K562 (cell line): ENCODE measurements at regions of chr4 and their contacts with region 1.

Region 1: DNA sequence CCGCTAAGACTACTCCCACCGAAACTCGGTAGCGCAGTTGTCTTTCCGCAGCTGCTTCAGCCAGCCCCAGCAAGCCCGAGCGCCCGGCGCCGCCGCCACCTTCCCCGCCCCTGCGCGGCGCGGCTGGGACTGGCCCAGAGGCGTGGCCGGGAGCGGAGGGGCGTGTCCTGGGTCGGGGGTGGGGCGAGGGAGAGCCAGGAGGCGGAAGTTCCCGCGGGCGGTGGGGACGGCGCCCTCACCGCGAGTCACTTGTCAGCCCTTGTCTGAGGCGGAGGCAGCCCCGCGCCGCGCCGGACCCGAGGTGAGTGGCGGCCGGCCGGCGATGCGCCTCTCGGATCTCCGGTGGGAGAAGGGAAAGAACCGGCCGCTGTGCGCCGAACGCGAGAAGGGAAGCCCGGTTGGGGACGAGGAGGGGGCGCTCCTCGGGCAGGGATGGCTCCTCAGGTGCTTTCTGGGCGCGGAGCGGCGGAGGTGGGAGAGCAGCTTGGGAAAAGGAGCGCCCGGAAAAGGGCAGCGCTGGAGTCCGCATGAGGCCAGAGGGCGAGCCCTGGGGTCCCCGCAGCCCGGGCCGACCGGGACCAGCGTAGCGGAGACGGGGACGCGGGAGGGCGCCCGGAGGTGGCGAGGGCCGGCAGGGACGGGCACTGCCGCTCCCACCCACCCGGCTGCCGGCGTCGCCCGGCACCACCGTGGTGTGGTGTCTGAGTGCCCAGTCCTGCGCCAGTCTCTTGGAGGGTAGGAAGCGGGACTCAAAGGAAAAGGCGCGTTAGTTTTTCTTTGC is at the start of gene PDLIM5:
- DNase-seq: peak; percentile 94 to 96 (median 94)
- ATAC-seq: peak; percentile 86
- H3K4me3 ChIP-seq: peak within 1 kb of the TSS; percentile 84
- H3K27ac ChIP-seq: peak within 1 kb of the TSS; percentile 68
- H3K4me1 ChIP-seq: peaks cover 4 to 16% of the 10 kb centered on the region in 2 experiments
- H3K27me3 ChIP-seq: no peaks in the 10 kb centered on the region
- CTCF ChIP-seq: no peak
- EP300 ChIP-seq: peak; percentile 31
- POLR2A ChIP-seq: peak; percentile 97
- RAD21 ChIP-seq: no peak
- polyA plus RNA-seq, gene PDLIM5: 42.2 to 55.8 TPM

Region 2: GRCh38 chr4:94477227-94477626 is 25.3 kb after region 1 on chr4:
- CTCF ChIA-PET with region 1: no interaction called
- POLR2A ChIA-PET with region 1: interaction called, 4 read pairs
- in situ Hi-C with region 1: no loop called
- intact Hi-C with region 1: loop called (anchors 2 kb)
- DNase-seq: no peak
- ATAC-seq: no peak
- H3K4me3 ChIP-seq: no peak overlapping the region
- H3K27ac ChIP-seq: peak overlapping the region; percentile 77
- H3K4me1 ChIP-seq: peaks cover 21 to 23% of the 10 kb centered on the region in 2 experiments
- H3K27me3 ChIP-seq: no peaks in the 10 kb centered on the region
- CTCF ChIP-seq: no peak
- EP300 ChIP-seq: no peak
- POLR2A ChIP-seq: no peak
- RAD21 ChIP-seq: no peak

Region 3: DNA sequence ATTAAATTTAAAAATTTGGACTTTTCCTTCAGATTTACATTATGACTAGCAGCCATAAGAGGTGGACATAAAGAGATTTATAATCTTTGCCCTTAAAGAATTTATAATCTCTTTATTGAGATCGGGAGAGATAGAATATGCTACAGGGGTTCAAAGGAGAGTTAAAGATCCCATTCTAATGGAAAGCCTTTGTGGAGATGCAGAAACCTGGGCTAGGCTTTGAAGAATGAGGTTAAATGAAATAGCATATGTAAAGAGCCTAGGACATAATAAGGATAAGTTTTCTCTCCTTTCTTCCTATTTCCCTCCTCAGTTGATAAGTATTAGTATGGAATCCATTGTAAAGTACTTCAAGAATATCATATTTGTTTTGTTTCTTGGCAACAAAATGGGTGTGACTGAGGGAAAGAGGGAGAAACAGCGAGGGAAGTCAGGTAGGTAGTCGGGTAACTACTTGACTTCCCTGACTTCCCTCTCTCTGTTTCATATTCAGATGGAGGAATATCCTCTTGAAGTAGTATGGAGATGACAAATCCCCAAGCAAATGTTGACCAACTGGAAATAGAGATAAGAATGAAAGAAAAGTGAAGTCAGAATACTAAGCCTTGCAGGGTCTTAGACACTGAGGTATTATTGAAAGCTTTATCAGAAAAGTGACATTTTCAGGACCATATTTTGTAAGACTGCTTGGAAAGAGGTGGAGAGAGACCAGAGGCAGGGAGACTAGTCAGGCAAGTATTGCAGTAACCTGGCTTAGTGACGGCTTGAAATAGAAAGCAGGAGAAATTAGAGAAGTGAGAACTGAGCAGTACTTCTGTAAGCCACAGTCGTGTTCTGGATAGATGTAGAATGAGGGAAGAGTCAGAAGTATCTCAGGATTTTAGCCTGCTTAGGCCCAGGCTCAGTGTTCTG is 82.8 kb after region 1 on chr4:
- CTCF ChIA-PET with region 1: no interaction called
- POLR2A ChIA-PET with region 1: no interaction called
- in situ Hi-C with region 1: no loop called
- intact Hi-C with region 1: loop called (anchors 1 kb)
- DNase-seq: peak; percentile 53 to 80 (median 58)
- ATAC-seq: peak; percentile 76
- H3K4me3 ChIP-seq: peak overlapping the region; percentile 8; the same call in 1 of the 2 replicates
- H3K27ac ChIP-seq: peak overlapping the region; percentile 95
- H3K4me1 ChIP-seq: peaks cover 13 to 48% of the 10 kb centered on the region in 2 experiments
- H3K27me3 ChIP-seq: no peaks in the 10 kb centered on the region
- CTCF ChIP-seq: no peak
- EP300 ChIP-seq: peak; percentile 79
- POLR2A ChIP-seq: no peak
- RAD21 ChIP-seq: 0 out of 4 replicates have a peak, but pooled peaks of 1 of the 2 experiments have one; percentile 2

Region 4: DNA sequence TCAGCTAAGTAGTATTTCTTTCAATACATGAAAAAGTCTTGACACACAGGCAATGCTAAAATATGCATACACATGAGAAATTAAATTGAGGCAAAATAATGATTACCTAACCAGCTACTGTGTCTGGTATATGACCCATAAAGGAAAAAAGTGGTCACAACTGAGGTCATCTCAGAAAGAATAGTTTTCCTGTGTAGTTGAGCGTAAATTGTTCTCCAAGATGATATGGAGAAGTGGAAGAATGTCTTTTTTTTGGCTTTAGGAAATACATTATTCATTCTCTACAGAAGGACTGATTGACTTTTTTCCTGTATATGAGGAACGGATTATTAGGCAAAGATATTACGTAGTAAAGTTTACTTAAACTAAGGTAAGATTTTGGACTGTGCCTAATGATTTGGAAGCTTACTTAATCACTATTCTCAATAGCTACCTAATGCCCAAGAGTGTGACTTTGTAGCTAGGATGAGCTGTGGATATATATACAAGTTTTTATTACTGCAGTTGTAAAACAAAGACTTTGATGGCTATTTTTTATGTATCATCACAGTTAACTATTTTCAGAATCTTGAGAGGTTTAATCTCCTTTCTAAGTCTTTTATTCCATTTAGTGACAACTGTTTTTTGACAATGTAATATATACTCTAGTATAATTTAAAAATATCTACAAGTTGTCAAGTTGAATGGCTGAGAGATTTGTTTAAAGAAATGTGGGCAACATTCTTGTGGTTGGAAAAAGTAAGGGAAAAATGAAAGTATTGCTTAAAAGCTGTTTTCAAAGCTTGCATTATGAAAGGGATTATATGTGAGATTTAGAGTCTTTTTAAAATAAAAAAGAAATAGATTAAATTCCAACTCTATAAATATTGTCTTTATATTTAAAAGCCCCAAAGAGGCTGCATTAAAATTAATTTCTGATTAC is 100.0 kb after region 1 on chr4:
- CTCF ChIA-PET with region 1: no interaction called
- POLR2A ChIA-PET with region 1: no interaction called
- in situ Hi-C with region 1: no loop called
- intact Hi-C with region 1: loop called (anchors 5 kb)
- DNase-seq: no peak
- ATAC-seq: no peak
- H3K4me3 ChIP-seq: no peak overlapping the region
- H3K27ac ChIP-seq: no peak overlapping the region
- H3K4me1 ChIP-seq: peaks cover 5 to 24% of the 10 kb centered on the region in 2 experiments; a peak in 4 of 5 replicates
- H3K27me3 ChIP-seq: no peaks in the 10 kb centered on the region
- CTCF ChIP-seq: no peak
- EP300 ChIP-seq: no peak
- POLR2A ChIP-seq: no peak
- RAD21 ChIP-seq: no peak

Region 5: GRCh38 chr4:94595879-94596483 is 144.1 kb after region 1 on chr4:
- CTCF ChIA-PET with region 1: interaction called, 3 read pairs
- POLR2A ChIA-PET with region 1: no interaction called
- in situ Hi-C with region 1: no loop called
- intact Hi-C with region 1: loop called (anchors 5 kb)
- DNase-seq: peak; percentile 14 to 59 (median 23)
- ATAC-seq: peak; percentile 79
- H3K4me3 ChIP-seq: no peak overlapping the region
- H3K27ac ChIP-seq: no peak overlapping the region
- H3K4me1 ChIP-seq: no peaks in the 10 kb centered on the region; a peak in 1 of 5 replicates
- H3K27me3 ChIP-seq: no peaks in the 10 kb centered on the region
- CTCF ChIP-seq: peak; percentile 30 to 77 (median 49); a peak in 3 of 6 replicates
- EP300 ChIP-seq: no peak
- POLR2A ChIP-seq: no peak
- RAD21 ChIP-seq: peak; percentile 90 to 92